AG04450 (cell line): ENCODE measurements at regions of chr3 and their contacts with region 1.

Region 1: GRCh38 chr3:129553719-129554118 is 10.7 kb downstream of the H1-8 start:
- DNase-seq: no peak
- H3K4me3 ChIP-seq: no peak overlapping the region
- H3K27ac ChIP-seq: no peak overlapping the region
- H3K27me3 ChIP-seq: no peaks in the 10 kb centered on the region
- CTCF ChIP-seq: no peak

Region 2: DNA sequence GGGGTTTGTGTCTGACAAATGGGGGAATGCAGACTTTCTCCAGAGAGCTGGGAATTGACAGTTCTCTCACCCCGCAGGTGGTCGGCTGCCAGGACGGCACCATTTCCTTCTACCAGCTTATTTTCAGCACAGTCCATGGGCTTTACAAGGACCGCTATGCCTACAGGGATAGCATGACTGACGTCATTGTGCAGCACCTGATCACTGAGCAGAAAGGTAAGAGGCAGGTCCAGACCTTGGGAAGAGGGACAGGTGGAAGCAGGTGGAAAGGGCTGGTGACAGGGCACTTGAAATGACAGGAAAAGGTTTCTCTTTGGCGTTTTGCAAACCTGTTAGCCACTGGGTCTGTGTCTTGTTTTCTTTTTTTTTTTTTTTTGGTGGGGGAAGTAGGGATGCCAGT is 77.1 kb before region 1 on chr3:
- CTCF ChIA-PET with region 1: interaction called, 15 read pairs
- POLR2A ChIA-PET with region 1: no interaction called
- DNase-seq: no peak
- H3K4me3 ChIP-seq: no peak overlapping the region
- H3K27ac ChIP-seq: no peak overlapping the region
- H3K27me3 ChIP-seq: no peaks in the 10 kb centered on the region
- CTCF ChIP-seq: no peak